Activated CD8-positive, alpha-beta T cell treated with anti-CD3 and anti-CD28 coated beads for 36 hours (primary cell): ENCODE measurements at regions of chr2 and their contacts with region 1.

Region 1: GRCh38 chr2:98412751-98413458 is 31.8 kb upstream of the INPP4A start:
- DNase-seq: peak; percentile 69
- ATAC-seq: peak; percentile 83
- H3K4me3 Mint-ChIP-seq: no peak overlapping the region
- H3K27ac Mint-ChIP-seq: no peak overlapping the region
- H3K4me1 Mint-ChIP-seq: peaks cover 21% of the 10 kb centered on the region
- H3K27me3 Mint-ChIP-seq: no peaks in the 10 kb centered on the region
- CTCF ChIP-seq: peak; percentile 84

Region 2: GRCh38 chr2:98334439-98335078 is 78.3 kb before region 1 on chr2:
- CTCF ChIA-PET with region 1: no interaction called
- POLR2A ChIA-PET with region 1: no interaction called
- intact Hi-C with region 1: no loop called
- DNase-seq: no peak
- ATAC-seq: no peak
- H3K4me3 Mint-ChIP-seq: no peak overlapping the region
- H3K27ac Mint-ChIP-seq: no peak overlapping the region
- H3K4me1 Mint-ChIP-seq: no peaks in the 10 kb centered on the region
- H3K27me3 Mint-ChIP-seq: peaks cover 17% of the 10 kb centered on the region
- CTCF ChIP-seq: no peak

Region 3: DNA sequence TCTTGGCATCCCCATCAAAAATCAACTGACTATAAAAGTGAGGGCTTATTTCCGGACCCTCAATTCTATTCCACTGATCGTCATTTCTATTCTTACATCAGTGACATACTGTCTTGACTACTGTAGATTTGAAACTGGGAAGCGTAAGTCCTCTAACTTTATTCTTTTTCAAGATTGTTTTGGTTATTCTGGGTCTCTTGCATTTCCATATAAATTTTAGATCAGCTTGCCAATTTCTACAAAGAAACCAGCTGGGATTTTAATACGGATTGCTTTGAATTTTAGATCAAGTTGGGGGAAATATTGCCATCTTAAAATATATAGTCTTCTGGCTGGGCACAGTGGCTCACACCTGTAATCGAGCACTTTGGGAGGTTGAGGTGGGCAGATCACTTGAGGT is 13.9 kb after region 1 on chr2:
- CTCF ChIA-PET with region 1: interaction called, 10 read pairs
- POLR2A ChIA-PET with region 1: interaction called, 3 read pairs
- intact Hi-C with region 1: no loop called
- DNase-seq: no peak
- ATAC-seq: no peak
- H3K4me3 Mint-ChIP-seq: no peak overlapping the region
- H3K27ac Mint-ChIP-seq: no peak overlapping the region
- H3K4me1 Mint-ChIP-seq: no peaks in the 10 kb centered on the region
- H3K27me3 Mint-ChIP-seq: no peaks in the 10 kb centered on the region
- CTCF ChIP-seq: no peak

Region 4: DNA sequence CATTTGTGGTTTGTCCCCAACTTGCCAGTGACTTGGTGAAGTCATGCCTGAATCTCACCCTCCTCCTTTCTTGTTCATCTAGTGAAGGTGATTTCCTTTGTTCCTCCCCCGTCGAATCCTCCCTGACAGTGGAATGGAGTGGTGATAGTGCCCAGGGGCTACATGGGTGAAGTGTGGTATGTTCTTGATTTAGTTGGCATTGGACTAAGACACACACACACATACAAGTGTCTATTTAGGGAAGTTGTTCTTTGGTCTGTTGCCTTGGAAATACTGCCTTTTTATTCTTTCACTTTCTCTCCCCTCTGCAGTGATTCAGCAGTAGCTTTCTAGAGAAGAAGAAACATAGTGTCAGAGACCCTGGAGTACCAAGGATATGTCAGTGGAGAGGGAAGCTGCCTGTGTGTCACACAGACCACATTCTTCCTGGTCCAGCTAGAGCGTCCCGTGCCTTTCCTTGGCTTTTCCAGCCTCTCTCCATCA is 42.6 kb after region 1 on chr2:
- CTCF ChIA-PET with region 1: interaction called, 14 read pairs
- POLR2A ChIA-PET with region 1: no interaction called
- intact Hi-C with region 1: no loop called
- DNase-seq: peak; percentile 53
- ATAC-seq: peak; percentile 50
- H3K4me3 Mint-ChIP-seq: peak overlapping the region; percentile 65
- H3K27ac Mint-ChIP-seq: peak overlapping the region; percentile 92
- H3K4me1 Mint-ChIP-seq: peaks cover 95% of the 10 kb centered on the region
- H3K27me3 Mint-ChIP-seq: no peaks in the 10 kb centered on the region
- CTCF ChIP-seq: no peak

Region 5: DNA sequence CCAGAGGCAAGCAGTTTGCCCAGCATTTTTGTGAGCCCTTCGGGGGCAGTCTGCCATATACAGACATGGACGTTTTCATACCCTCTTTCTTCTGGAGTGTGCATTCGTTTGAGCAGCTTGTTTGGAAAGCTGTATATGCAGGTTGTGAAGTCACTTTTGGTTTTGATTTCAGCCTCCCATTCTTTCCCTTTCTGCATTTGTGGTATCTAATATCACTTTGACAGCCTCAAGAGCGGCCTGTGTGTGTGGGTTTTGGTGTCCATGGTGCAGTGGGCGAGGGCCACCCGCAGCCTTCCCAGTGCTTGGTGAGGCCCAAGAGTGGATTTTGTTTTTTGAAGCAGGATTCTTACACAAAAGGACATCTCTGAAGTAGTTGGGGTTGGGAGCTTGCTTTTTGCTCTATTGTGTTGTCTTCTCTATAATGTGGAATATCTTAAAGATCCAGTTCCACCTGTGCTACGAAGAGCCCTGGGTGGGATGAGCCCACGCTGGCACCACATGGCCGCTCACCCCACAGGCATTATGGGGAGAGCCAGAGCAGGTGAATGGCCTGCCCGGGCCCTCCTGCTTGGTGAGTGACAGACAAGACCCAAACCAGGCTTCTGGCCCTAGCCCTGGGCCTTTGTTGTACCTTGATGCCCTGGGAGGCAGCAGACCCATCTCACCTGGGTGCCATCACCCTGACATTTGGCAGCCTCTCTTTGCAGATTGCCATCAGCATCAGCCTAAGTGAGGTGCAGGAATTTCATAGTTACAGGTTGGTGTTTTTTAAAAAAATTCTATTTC is 61.3 kb after region 1 on chr2:
- CTCF ChIA-PET with region 1: interaction called, 3 read pairs
- POLR2A ChIA-PET with region 1: no interaction called
- intact Hi-C with region 1: loop called (anchors 5 kb)
- DNase-seq: peak; percentile 46
- ATAC-seq: peak; percentile 41
- H3K4me3 Mint-ChIP-seq: peak overlapping the region; percentile 72
- H3K27ac Mint-ChIP-seq: peak overlapping the region; percentile 96
- H3K4me1 Mint-ChIP-seq: peaks cover 94% of the 10 kb centered on the region
- H3K27me3 Mint-ChIP-seq: no peaks in the 10 kb centered on the region
- CTCF ChIP-seq: no peak

Region 6: DNA sequence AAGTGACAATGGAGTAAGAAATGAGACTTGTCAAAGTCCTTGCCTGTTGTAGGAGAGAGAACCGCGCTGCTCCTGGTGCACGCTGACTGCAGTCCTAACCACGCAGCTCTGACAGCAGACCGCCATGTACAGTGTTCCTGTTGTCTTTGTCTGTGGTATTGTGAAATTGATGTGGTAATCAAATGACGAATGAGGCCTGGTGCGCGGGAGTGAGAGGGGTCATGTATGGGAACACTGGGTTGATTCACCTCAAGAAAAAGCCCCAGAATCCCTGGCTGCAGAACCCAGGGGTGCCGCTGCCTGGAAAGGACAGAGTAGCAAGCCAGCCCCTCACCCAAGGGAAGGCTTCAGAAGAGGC is 95.8 kb after region 1 on chr2:
- CTCF ChIA-PET with region 1: interaction called, 15 read pairs
- POLR2A ChIA-PET with region 1: no interaction called
- intact Hi-C with region 1: no loop called
- DNase-seq: peak; percentile 77
- ATAC-seq: peak; percentile 72
- H3K4me3 Mint-ChIP-seq: peak overlapping the region; percentile 8
- H3K27ac Mint-ChIP-seq: peak overlapping the region; percentile 81
- H3K4me1 Mint-ChIP-seq: peaks cover 91% of the 10 kb centered on the region
- H3K27me3 Mint-ChIP-seq: no peaks in the 10 kb centered on the region
- CTCF ChIP-seq: no peak

Region 7: GRCh38 chr2:98532756-98533155 is 119.9 kb after region 1 on chr2:
- CTCF ChIA-PET with region 1: interaction called, 13 read pairs
- POLR2A ChIA-PET with region 1: interaction called, 3 read pairs
- intact Hi-C with region 1: no loop called
- DNase-seq: no peak
- ATAC-seq: no peak
- H3K4me3 Mint-ChIP-seq: no peak overlapping the region
- H3K27ac Mint-ChIP-seq: no peak overlapping the region
- H3K4me1 Mint-ChIP-seq: peaks cover 6% of the 10 kb centered on the region
- H3K27me3 Mint-ChIP-seq: no peaks in the 10 kb centered on the region
- CTCF ChIP-seq: no peak

Region 8: GRCh38 chr2:98601532-98602132 is 188.7 kb after region 1 on chr2:
- CTCF ChIA-PET with region 1: interaction called, 3 read pairs
- POLR2A ChIA-PET with region 1: no interaction called
- intact Hi-C with region 1: loop called (anchors 5 kb)
- DNase-seq: peak; percentile 32
- ATAC-seq: peak; percentile 88
- H3K4me3 Mint-ChIP-seq: no peak overlapping the region
- H3K27ac Mint-ChIP-seq: peak overlapping the region; percentile 32
- H3K4me1 Mint-ChIP-seq: peaks cover 41% of the 10 kb centered on the region
- H3K27me3 Mint-ChIP-seq: no peaks in the 10 kb centered on the region
- CTCF ChIP-seq: peak; percentile 73